B cell (primary cell): ENCODE measurements at regions of chr9 and their contacts with region 1.

Region 1: GRCh38 chr9:96327694-96328352 is 25.8 kb upstream of the HSD17B3 start:
- DNase-seq: peak; percentile 64
- ATAC-seq: peak; percentile 56
- H3K4me3 ChIP-seq: no peak overlapping the region
- H3K4me3 Mint-ChIP-seq: no peak overlapping the region
- H3K27ac ChIP-seq: no peak overlapping the region
- H3K27ac Mint-ChIP-seq: no peak overlapping the region
- H3K4me1 ChIP-seq: no peaks in the 10 kb centered on the region
- H3K4me1 Mint-ChIP-seq: no peaks in the 10 kb centered on the region
- H3K27me3 ChIP-seq: no peaks in the 10 kb centered on the region
- H3K27me3 Mint-ChIP-seq: no peaks in the 10 kb centered on the region
- CTCF ChIP-seq: peak; percentile 91

Region 2: DNA sequence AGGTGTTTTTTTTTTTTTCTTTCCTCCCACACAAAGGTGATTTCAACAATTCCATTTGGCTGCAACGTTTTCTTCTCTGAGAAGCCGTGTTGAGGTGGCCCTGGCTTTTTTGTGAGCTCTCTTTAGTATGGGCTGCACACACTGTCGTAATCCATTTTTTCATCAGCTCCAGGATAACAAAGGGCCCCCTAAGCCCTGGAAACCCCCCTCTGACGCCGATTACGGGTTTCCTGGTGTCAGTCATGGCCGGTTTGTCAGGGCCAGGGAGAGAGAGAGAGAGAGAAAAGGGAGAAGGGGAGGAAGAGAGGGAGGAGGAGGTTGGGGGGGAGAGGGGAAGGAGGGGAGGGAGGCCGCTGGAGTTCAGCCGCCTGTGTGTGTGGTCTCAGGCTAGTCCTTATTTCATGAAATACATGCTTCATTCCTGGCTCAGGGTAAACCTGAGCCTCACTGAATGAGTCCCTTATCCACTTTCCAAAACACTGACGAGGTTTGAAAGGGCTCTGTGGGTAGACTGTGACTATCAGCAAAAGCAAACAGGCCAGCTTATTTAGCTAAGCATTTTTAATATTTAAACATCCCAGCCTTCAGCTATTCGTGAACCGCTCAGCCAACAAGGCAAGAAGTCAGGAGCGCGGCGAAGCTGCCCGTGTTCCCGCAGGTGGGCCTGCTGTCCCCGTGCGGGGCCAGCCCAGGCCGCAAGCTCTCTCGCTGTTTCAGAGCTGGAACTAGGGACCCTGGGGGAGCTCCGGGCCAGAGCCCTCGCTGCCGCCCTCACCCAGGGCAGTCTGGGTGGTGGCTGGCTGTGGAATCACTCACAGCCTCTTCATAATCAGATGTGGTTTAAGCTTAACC is 279.5 kb before region 1 on chr9:
- CTCF ChIA-PET with region 1: no interaction called
- POLR2A ChIA-PET with region 1: no interaction called
- intact Hi-C with region 1: no loop called
- DNase-seq: no peak
- ATAC-seq: no peak
- H3K4me3 ChIP-seq: no peak overlapping the region
- H3K4me3 Mint-ChIP-seq: no peak overlapping the region
- H3K27ac ChIP-seq: no peak overlapping the region
- H3K27ac Mint-ChIP-seq: no peak overlapping the region
- H3K4me1 ChIP-seq: no peaks in the 10 kb centered on the region
- H3K4me1 Mint-ChIP-seq: no peaks in the 10 kb centered on the region
- H3K27me3 ChIP-seq: peaks cover 0 to 5% (median 1%) of the 10 kb centered on the region in 4 experiments
- H3K27me3 Mint-ChIP-seq: peaks cover 26% of the 10 kb centered on the region
- CTCF ChIP-seq: no peak

Region 3: GRCh38 chr9:96317335-96317980 is 10.4 kb before region 1 on chr9:
- CTCF ChIA-PET with region 1: interaction called, 20 read pairs
- POLR2A ChIA-PET with region 1: no interaction called
- intact Hi-C with region 1: no loop called
- DNase-seq: peak; percentile 58
- ATAC-seq: peak; percentile 47
- H3K4me3 ChIP-seq: no peak overlapping the region
- H3K4me3 Mint-ChIP-seq: no peak overlapping the region
- H3K27ac ChIP-seq: no peak overlapping the region
- H3K27ac Mint-ChIP-seq: no peak overlapping the region
- H3K4me1 ChIP-seq: no peaks in the 10 kb centered on the region
- H3K4me1 Mint-ChIP-seq: no peaks in the 10 kb centered on the region
- H3K27me3 ChIP-seq: peaks cover 0 to 10% (median 1%) of the 10 kb centered on the region in 4 experiments
- H3K27me3 Mint-ChIP-seq: peaks cover 4% of the 10 kb centered on the region
- CTCF ChIP-seq: peak; percentile 83

Region 4: GRCh38 chr9:96449845-96450612 is 122.2 kb after region 1 on chr9 and contains the start of gene HABP4:
- CTCF ChIA-PET with region 1: interaction called, 8 read pairs
- POLR2A ChIA-PET with region 1: no interaction called
- intact Hi-C with region 1: loop called (anchors 1 kb)
- DNase-seq: peak; percentile 96
- ATAC-seq: peak; percentile 95
- H3K4me3 ChIP-seq: peak within 1 kb of the TSS; percentile 59 to 74 (median 65)
- H3K4me3 Mint-ChIP-seq: peak within 1 kb of the TSS; percentile 94
- H3K27ac ChIP-seq: no peak within 1 kb of the TSS
- H3K27ac Mint-ChIP-seq: peak within 1 kb of the TSS; percentile 83
- H3K4me1 ChIP-seq: peaks cover 12 to 13% of the 10 kb centered on the region in 2 donors
- H3K4me1 Mint-ChIP-seq: peaks cover 14% of the 10 kb centered on the region
- H3K27me3 ChIP-seq: peaks cover 0 to 8% (median 0%) of the 10 kb centered on the region in 4 experiments
- H3K27me3 Mint-ChIP-seq: peaks cover 7% of the 10 kb centered on the region
- CTCF ChIP-seq: no peak
- total RNA-seq, gene HABP4: 14.1 and 15.0 TPM in 2 replicates

Region 5: DNA sequence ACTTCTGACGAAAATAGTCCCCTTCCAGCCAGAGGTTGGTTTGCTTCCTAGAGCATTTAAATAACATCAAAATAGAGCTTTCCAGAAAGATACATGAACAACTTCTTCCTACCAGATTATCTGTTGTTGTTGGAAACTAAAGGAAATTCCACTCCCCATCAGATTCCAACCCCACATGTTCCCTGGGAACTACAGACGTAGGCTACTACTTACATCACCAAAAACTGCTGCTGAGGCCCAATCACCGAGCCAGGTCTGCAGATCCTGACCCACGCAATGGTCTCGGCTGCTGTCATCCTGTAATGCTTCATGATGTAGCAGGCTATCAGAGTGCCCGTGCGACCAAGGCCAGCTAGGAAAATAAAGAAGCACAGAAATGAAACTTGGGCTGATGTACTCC is 195.6 kb after region 1 on chr9:
- CTCF ChIA-PET with region 1: no interaction called
- POLR2A ChIA-PET with region 1: no interaction called
- intact Hi-C with region 1: no loop called
- DNase-seq: no peak
- ATAC-seq: no peak
- H3K4me3 ChIP-seq: no peak overlapping the region
- H3K4me3 Mint-ChIP-seq: no peak overlapping the region
- H3K27ac ChIP-seq: no peak overlapping the region
- H3K27ac Mint-ChIP-seq: no peak overlapping the region
- H3K4me1 ChIP-seq: no peaks in the 10 kb centered on the region
- H3K4me1 Mint-ChIP-seq: no peaks in the 10 kb centered on the region
- H3K27me3 ChIP-seq: no peaks in the 10 kb centered on the region
- H3K27me3 Mint-ChIP-seq: no peaks in the 10 kb centered on the region
- CTCF ChIP-seq: no peak

Region 6: DNA sequence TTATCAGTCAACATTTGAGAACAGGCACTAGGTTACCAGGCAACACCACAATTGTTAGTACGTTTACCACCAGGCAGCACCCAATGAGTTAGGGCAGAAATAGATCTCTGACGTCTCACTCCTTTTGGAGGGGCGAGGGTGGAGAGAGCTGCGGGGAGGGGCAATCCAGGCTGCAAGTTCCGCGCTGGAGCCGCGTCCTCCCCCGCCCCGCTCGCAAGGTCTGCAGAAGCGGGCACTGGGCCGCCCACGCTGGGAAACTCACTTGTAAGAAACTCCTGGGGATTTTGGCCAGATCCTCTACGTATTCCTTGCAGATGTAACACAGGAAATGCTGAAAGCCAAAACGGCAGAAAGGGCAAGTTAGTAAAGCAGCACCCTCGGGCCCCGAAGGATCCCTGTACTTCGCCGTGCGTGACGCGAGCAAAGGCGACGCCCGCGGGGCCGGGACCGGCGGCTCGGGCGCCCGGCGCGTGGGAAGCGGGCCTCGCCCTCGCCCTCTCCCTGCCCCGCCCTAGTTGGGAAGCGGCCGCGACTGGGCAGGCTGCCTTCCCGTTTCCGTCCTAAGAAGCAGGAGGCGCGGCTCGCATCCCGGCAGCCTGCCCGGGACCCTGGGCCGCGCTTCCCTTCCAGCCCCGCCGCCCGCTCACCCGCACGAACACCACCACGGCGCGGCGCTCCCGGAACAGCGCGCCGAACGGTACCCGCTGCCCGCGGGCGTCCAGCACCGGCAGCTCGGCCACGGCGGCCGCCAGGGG is 326.8 kb after region 1 on chr9:
- CTCF ChIA-PET with region 1: interaction called, 29 read pairs
- POLR2A ChIA-PET with region 1: no interaction called
- intact Hi-C with region 1: loop called (anchors 1 kb)
- DNase-seq: peak; percentile 89
- ATAC-seq: peak; percentile 62
- H3K4me3 ChIP-seq: peak overlapping the region in 4 of 5 experiments; percentile 44 to 84 (median 60)
- H3K4me3 Mint-ChIP-seq: peak overlapping the region; percentile 96
- H3K27ac ChIP-seq: peak overlapping the region; percentile 69 to 85
- H3K27ac Mint-ChIP-seq: peak overlapping the region; percentile 98
- H3K4me1 ChIP-seq: peaks cover 8 to 16% of the 10 kb centered on the region in 2 donors
- H3K4me1 Mint-ChIP-seq: peaks cover 19% of the 10 kb centered on the region
- H3K27me3 ChIP-seq: no peaks in the 10 kb centered on the region
- H3K27me3 Mint-ChIP-seq: no peaks in the 10 kb centered on the region
- CTCF ChIP-seq: no peak

Region 7: DNA sequence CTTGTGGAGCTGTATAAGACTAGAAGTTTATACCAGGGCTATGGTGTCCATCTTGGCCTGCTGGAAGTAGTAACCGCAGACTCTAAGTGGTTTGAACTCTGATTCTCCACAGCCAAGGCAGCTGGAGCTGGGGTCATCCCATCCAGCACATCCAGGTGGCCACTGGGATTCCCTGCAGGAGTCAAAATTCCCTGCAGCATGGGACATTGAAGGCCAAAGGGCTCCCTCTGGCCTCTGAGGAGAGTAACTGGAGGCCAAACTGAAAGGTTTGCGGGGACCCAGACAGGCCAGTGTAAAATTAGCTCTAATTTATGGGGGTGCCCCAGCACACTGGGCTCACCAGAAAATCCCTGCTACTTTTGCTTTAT is 339.5 kb after region 1 on chr9:
- CTCF ChIA-PET with region 1: interaction called, 61 read pairs
- POLR2A ChIA-PET with region 1: no interaction called
- intact Hi-C with region 1: loop called (anchors 1 kb)
- DNase-seq: no peak
- ATAC-seq: no peak
- H3K4me3 ChIP-seq: no peak overlapping the region
- H3K4me3 Mint-ChIP-seq: no peak overlapping the region
- H3K27ac ChIP-seq: no peak overlapping the region
- H3K27ac Mint-ChIP-seq: no peak overlapping the region
- H3K4me1 ChIP-seq: no peaks in the 10 kb centered on the region
- H3K4me1 Mint-ChIP-seq: no peaks in the 10 kb centered on the region
- H3K27me3 ChIP-seq: peaks cover 0 to 4% (median 0%) of the 10 kb centered on the region in 4 experiments
- H3K27me3 Mint-ChIP-seq: peaks cover 14% of the 10 kb centered on the region
- CTCF ChIP-seq: no peak

Region 8: GRCh38 chr9:96674914-96675538 is 347.2 kb after region 1 on chr9:
- CTCF ChIA-PET with region 1: interaction called, 12 read pairs
- POLR2A ChIA-PET with region 1: no interaction called
- intact Hi-C with region 1: no loop called
- DNase-seq: no peak
- ATAC-seq: no peak
- H3K4me3 ChIP-seq: no peak overlapping the region
- H3K4me3 Mint-ChIP-seq: no peak overlapping the region
- H3K27ac ChIP-seq: no peak overlapping the region
- H3K27ac Mint-ChIP-seq: no peak overlapping the region
- H3K4me1 ChIP-seq: no peaks in the 10 kb centered on the region
- H3K4me1 Mint-ChIP-seq: no peaks in the 10 kb centered on the region
- H3K27me3 ChIP-seq: peaks cover 0 to 6% (median 2%) of the 10 kb centered on the region in 4 experiments
- H3K27me3 Mint-ChIP-seq: peaks cover 22% of the 10 kb centered on the region
- CTCF ChIP-seq: no peak